ENCODE measurements at regions of chr9 and their contacts with region 1.

Region 1: GRCh38 chr9:112119225-112120029 is 55.7 kb downstream of the SUSD1 start:
- DNase-seq: no peak
- ATAC-seq: no peak
- H3K4me3 Mint-ChIP-seq: no peak overlapping the region
- H3K27ac Mint-ChIP-seq: no peak overlapping the region
- H3K4me1 Mint-ChIP-seq: peaks cover 11% of the 10 kb centered on the region
- H3K27me3 Mint-ChIP-seq: no peaks in the 10 kb centered on the region

Region 2: GRCh38 chr9:112180387-112180881 is 61.0 kb after region 1 on chr9:
- CTCF ChIA-PET with region 1: interaction called, 3 read pairs
- POLR2A ChIA-PET with region 1: no interaction called
- intact Hi-C with region 1: loop called in 1 of 2 experiments (anchors 5 kb)
- DNase-seq: peak; percentile 74
- ATAC-seq: peak; percentile 87
- H3K4me3 Mint-ChIP-seq: peak overlapping the region; percentile 18
- H3K27ac Mint-ChIP-seq: peak overlapping the region; percentile 5
- H3K4me1 Mint-ChIP-seq: peaks cover 30% of the 10 kb centered on the region
- H3K27me3 Mint-ChIP-seq: peaks cover 14% of the 10 kb centered on the region